IMR-90 (cell line): ENCODE measurements at regions of chr6 and their contacts with region 1.

Region 1: DNA sequence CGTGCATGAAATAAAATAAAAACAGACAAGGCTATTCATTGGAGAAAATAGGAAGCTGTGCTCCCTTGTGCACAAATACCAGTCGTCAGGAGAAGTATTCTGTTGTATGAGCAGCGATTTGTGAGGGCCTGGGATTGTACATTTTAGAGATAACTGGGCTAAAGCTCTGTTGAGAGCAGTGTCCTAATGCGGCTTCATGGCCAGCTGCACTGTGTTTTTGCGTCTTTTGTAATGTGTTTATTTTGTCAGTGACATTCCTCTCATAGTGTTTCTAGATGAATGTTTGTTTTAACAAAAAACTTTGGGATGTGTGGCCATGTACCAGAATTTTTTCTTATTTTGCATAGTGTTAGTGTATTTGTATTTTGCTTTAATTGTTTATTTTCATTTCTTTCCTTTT is 14.8 kb downstream of the ERMARD start:
- DNase-seq: peak; percentile 88
- ATAC-seq: peak; percentile 96
- H3K4me3 ChIP-seq: no peak overlapping the region
- H3K27ac ChIP-seq: peak overlapping the region; percentile 85; the same call in 1 of the 2 replicates
- H3K4me1 ChIP-seq: peaks cover 21% of the 10 kb centered on the region
- H3K27me3 ChIP-seq: no peaks in the 10 kb centered on the region
- CTCF ChIP-seq: no peak
- POLR2A ChIP-seq: no peak
- RAD21 ChIP-seq: no peak

Region 2: DNA sequence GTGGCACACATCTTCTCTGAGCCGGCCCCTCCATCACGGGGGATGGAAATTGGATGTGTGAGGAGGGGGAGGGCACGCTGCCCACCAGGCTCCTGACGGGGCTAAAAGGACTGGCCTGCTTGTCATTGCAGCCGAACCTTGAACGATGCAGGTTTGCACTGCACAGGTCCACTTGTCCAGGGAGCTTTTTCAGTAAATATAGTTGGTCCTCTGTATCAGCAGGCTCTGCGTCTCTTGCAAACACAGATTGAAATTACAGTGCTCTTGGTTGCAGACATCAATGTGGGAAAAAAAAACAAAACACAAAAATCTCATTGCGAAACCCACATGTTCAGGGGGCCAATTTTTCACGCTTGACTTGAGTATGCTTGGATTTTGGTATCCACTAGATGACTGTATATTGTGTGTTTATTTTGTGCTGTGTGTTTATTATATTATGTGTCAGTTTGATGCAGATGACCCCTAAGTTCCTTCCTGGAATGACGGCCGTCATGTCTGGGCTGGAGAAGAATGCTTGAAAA is 14.4 kb after region 1 on chr6:
- CTCF ChIA-PET with region 1: interaction called, 4 read pairs
- POLR2A ChIA-PET with region 1: no interaction called
- dilution Hi-C with region 1: no loop called
- in situ Hi-C with region 1: no loop called
- intact Hi-C with region 1: loop called (anchors 1 kb)
- DNase-seq: peak; percentile 90
- ATAC-seq: peak; percentile 84
- H3K4me3 ChIP-seq: no peak overlapping the region
- H3K27ac ChIP-seq: peak overlapping the region; percentile 74; the same call in 1 of the 2 replicates
- H3K4me1 ChIP-seq: peaks cover 12% of the 10 kb centered on the region
- H3K27me3 ChIP-seq: no peaks in the 10 kb centered on the region
- CTCF ChIP-seq: no peak
- POLR2A ChIP-seq: no peak
- RAD21 ChIP-seq: no peak